ENCODE measurements at regions of chr1 and their contacts with region 1.

Region 1: DNA sequence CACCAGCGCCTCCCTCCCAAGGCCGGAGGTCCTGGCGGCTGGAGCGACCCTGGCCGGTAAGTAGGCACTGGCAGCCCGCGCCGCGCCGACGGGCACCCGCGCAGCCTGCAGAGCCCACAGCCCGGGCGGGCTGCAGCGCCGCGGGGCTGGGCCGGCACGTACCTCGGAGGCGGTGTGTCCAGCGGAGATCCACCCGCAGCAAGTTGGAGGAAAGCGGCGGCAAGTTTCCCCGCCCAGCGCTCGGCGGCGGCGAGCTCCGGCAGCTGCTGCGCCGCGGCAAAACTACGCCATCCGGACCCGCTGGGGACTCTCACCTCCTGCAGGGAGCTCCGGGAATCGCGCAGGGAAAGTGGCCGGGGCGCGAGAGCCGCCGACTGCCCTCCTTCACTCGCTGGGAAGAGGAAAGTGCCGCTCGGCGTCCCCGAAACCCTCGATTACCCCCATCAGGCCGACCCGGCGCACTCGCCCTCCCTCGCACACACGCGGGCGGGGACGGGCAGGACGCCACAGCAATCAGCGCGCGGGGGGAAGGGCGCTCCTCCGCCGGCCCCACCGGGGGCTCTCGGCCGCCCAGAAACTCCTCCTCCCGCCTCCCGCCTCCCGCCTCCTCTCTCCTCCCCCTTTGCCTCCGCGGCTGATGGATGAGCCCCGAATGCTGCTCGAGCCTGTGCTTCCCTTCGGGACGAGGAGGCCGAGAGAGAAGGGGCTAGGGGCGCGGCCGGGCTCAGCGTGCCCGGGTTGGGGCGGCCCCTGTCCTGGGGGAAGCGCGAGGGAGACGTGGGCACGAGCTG is at the start of gene TGFBR3:
- DNase-seq: peak; percentile 61 to 79 (median 73)
- ATAC-seq: peak; percentile 84
- H3K4me3 ChIP-seq: peak within 1 kb of the TSS; percentile 54
- H3K4me3 Mint-ChIP-seq: peak within 1 kb of the TSS; percentile 86 to 99 (median 94)
- H3K27ac ChIP-seq: peak within 1 kb of the TSS; percentile 68
- H3K27ac Mint-ChIP-seq: peak within 1 kb of the TSS; percentile 78 to 94 (median 85)
- H3K4me1 ChIP-seq: peaks cover 12 to 15% of the 10 kb centered on the region in 2 donors
- H3K4me1 Mint-ChIP-seq: peaks cover 21 to 43% (median 27%) of the 10 kb centered on the region in 7 donors
- H3K27me3 ChIP-seq: no peaks in the 10 kb centered on the region
- H3K27me3 Mint-ChIP-seq: peaks cover 0 to 42% (median 0%) of the 10 kb centered on the region in 5 donors
- total RNA-seq, gene TGFBR3: 10.1 to 36.3 (median 18.5) TPM

Region 2: GRCh38 chr1:91523482-91523881 is 362.4 kb before region 1 on chr1:
- CTCF ChIA-PET with region 1: interaction called, 10 read pairs
- POLR2A ChIA-PET with region 1: interaction called, 3 read pairs
- intact Hi-C with region 1: no loop called
- DNase-seq: peak in 1 of 9 donors; percentile 32
- ATAC-seq: peak; percentile 51
- H3K4me3 ChIP-seq: no peak overlapping the region
- H3K4me3 Mint-ChIP-seq: no peak overlapping the region
- H3K27ac ChIP-seq: no peak overlapping the region
- H3K27ac Mint-ChIP-seq: peak overlapping the region in 3 of 9 donors; percentile 8 to 76 (median 19)
- H3K4me1 ChIP-seq: peaks cover 0 to 3% of the 10 kb centered on the region in 2 donors
- H3K4me1 Mint-ChIP-seq: peaks cover 5 to 31% (median 10%) of the 10 kb centered on the region in 7 donors
- H3K27me3 ChIP-seq: no peaks in the 10 kb centered on the region
- H3K27me3 Mint-ChIP-seq: no peaks in the 10 kb centered on the region

Region 3: GRCh38 chr1:91697416-91697815 is 188.5 kb before region 1 on chr1:
- CTCF ChIA-PET with region 1: no interaction called
- POLR2A ChIA-PET with region 1: no interaction called
- intact Hi-C with region 1: loop called in 1 of 2 experiments (anchors 5 kb)
- DNase-seq: peak in 8 of 9 donors; percentile 52 to 73 (median 60)
- ATAC-seq: peak; percentile 88
- H3K4me3 ChIP-seq: peak overlapping the region; percentile 45
- H3K4me3 Mint-ChIP-seq: peak overlapping the region; percentile 25 to 88 (median 57)
- H3K27ac ChIP-seq: peak overlapping the region; percentile 35
- H3K27ac Mint-ChIP-seq: peak overlapping the region; percentile 39 to 90 (median 83)
- H3K4me1 ChIP-seq: peaks cover 14 to 18% of the 10 kb centered on the region in 2 donors
- H3K4me1 Mint-ChIP-seq: peaks cover 19 to 43% (median 37%) of the 10 kb centered on the region in 7 donors
- H3K27me3 ChIP-seq: no peaks in the 10 kb centered on the region
- H3K27me3 Mint-ChIP-seq: no peaks in the 10 kb centered on the region

Region 4: DNA sequence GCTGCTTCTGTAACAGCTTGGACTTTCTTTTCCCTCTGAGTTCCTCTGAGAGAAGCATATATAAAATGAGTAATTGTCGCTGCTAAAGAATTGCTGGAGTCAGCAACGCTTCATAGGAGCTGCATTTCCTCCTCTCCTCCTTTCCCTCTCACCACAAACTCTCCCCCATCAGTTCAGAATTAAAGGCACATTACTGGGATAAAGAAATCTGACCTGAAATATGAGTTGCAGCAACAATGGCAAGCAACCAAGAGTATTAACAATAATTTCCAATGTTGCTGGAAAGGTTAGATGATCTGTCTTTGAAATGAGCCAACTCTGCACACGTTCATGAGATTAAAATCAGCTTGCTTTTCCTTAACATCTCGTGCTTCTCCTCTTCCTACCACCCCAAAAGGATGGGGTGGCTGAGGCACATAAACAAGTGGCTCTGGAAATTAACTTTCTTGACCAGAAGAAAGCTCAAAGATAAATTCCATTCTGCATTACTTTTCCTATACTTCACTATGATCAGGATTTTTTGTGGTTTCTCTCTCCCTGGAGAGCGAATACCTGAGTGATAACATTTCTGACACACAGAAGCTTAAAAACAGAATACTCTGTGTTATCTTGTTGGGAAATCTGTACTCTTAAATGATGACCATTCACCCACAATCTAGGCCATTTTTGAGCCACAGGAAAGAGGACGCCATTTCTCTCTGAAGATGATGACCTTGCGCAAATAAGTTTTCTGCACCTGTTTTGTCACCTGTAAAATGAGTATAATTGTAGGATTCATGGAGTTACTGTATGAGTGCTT is 90.1 kb before region 1 on chr1:
- CTCF ChIA-PET with region 1: interaction called, 3 read pairs
- POLR2A ChIA-PET with region 1: interaction called, 3 read pairs
- intact Hi-C with region 1: loop called in 1 of 2 experiments (anchors 1 kb)
- DNase-seq: no peak
- ATAC-seq: no peak
- H3K4me3 ChIP-seq: no peak overlapping the region
- H3K4me3 Mint-ChIP-seq: no peak overlapping the region
- H3K27ac ChIP-seq: no peak overlapping the region
- H3K27ac Mint-ChIP-seq: peak overlapping the region in 1 of 9 donors; percentile 32
- H3K4me1 ChIP-seq: peaks cover 16 to 25% of the 10 kb centered on the region in 2 donors
- H3K4me1 Mint-ChIP-seq: peaks cover 22 to 42% (median 30%) of the 10 kb centered on the region in 7 donors
- H3K27me3 ChIP-seq: no peaks in the 10 kb centered on the region
- H3K27me3 Mint-ChIP-seq: peaks cover 0 to 2% (median 0%) of the 10 kb centered on the region in 5 donors

Region 5: GRCh38 chr1:92030656-92031107 is 144.8 kb after region 1 on chr1:
- CTCF ChIA-PET with region 1: no interaction called
- POLR2A ChIA-PET with region 1: no interaction called
- intact Hi-C with region 1: loop called in 1 of 2 experiments (anchors 5 kb)
- DNase-seq: peak in 1 of 9 donors; percentile 5
- ATAC-seq: no peak
- H3K4me3 ChIP-seq: peak overlapping the region; percentile 55
- H3K4me3 Mint-ChIP-seq: peak overlapping the region; percentile 70 to 87 (median 80)
- H3K27ac ChIP-seq: no peak overlapping the region
- H3K27ac Mint-ChIP-seq: peak overlapping the region in 4 of 9 donors; percentile 16 to 63 (median 52)
- H3K4me1 ChIP-seq: peaks cover 4 to 7% of the 10 kb centered on the region in 2 donors
- H3K4me1 Mint-ChIP-seq: peaks cover 5 to 24% (median 18%) of the 10 kb centered on the region in 7 donors
- H3K27me3 ChIP-seq: peaks cover 0 to 3% of the 10 kb centered on the region in 2 donors
- H3K27me3 Mint-ChIP-seq: peaks cover 16 to 40% (median 20%) of the 10 kb centered on the region in 5 donors

Region 6: DNA sequence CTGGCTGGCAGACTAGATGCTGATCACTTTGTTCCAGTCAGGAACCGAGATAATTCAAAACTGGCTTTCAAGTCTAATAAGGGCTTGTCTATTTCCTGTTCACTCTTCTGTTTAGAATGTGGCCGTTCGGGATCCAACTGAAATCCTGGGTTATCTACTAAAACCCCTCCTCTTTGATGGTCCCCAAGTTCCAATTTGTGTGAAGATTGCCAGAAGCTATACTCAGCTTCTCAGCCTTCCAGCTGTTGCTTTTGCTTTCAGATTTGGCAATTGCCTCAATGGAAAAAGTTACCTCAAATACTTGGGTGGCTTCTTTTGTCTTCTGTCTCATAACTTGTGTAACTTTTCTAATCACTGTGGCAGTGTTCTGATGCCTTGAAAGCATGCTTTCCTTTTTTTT is 238.0 kb after region 1 on chr1:
- CTCF ChIA-PET with region 1: no interaction called
- POLR2A ChIA-PET with region 1: no interaction called
- intact Hi-C with region 1: no loop called
- DNase-seq: peak in 1 of 9 donors; percentile 2
- ATAC-seq: no peak
- H3K4me3 ChIP-seq: no peak overlapping the region
- H3K4me3 Mint-ChIP-seq: peak overlapping the region in 9 of 10 donors; percentile 27 to 69 (median 51)
- H3K27ac ChIP-seq: no peak overlapping the region
- H3K27ac Mint-ChIP-seq: peak overlapping the region in 1 of 9 donors; percentile 7
- H3K4me1 ChIP-seq: no peaks in the 10 kb centered on the region
- H3K4me1 Mint-ChIP-seq: peaks cover 0 to 18% (median 8%) of the 10 kb centered on the region in 7 donors
- H3K27me3 ChIP-seq: no peaks in the 10 kb centered on the region
- H3K27me3 Mint-ChIP-seq: no peaks in the 10 kb centered on the region